ENCODE measurements at regions of chr2 and their contacts with region 1.

Region 1: GRCh38 chr2:55357927-55358326 is 61.7 kb downstream of the CCDC88A start:
- DNase-seq: no peak
- ATAC-seq: no peak
- H3K4me3 ChIP-seq: no peak overlapping the region
- H3K27ac ChIP-seq: no peak overlapping the region
- H3K4me1 ChIP-seq: peaks cover 6% of the 10 kb centered on the region; the same call in 1 of the 2 replicates
- H3K27me3 ChIP-seq: no peaks in the 10 kb centered on the region
- CTCF ChIP-seq: no peak

Region 2: DNA sequence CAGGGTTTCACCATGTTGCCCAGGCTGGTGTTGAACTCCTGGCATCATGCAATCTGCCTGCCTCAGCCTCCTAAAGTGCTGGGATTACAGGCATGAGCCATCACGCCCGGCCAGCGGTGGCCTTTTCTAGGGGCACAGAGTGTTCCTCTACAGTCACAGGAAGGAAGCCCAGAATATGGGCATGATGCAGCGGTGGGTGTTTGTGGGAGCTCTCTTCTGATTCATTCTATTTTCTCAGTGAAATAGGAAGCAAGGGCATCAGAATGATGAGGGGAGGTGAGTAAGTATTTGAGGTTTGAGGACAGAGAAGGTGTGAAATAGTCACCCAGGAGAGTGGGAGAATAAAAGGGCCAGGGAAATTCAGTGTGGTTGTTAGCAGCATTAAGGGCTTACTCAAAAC is 1316.8 kb before region 1 on chr2:
- CTCF ChIA-PET with region 1: no interaction called
- POLR2A ChIA-PET with region 1: no interaction called
- intact Hi-C with region 1: no loop called
- DNase-seq: peak; percentile 41
- ATAC-seq: peak; percentile 18; the same call in 1 of the 2 replicates
- H3K4me3 ChIP-seq: no peak overlapping the region
- H3K27ac ChIP-seq: peak overlapping the region; percentile 22; the same call in 1 of the 2 replicates
- H3K4me1 ChIP-seq: peaks cover 27% of the 10 kb centered on the region
- H3K27me3 ChIP-seq: no peaks in the 10 kb centered on the region
- CTCF ChIP-seq: no peak

Region 3: GRCh38 chr2:55338268-55338667 is 19.7 kb before region 1 on chr2:
- CTCF ChIA-PET with region 1: no interaction called
- POLR2A ChIA-PET with region 1: interaction called, 25 read pairs
- intact Hi-C with region 1: no loop called
- DNase-seq: no peak
- ATAC-seq: no peak
- H3K4me3 ChIP-seq: no peak overlapping the region
- H3K27ac ChIP-seq: no peak overlapping the region
- H3K4me1 ChIP-seq: no peaks in the 10 kb centered on the region
- H3K27me3 ChIP-seq: no peaks in the 10 kb centered on the region
- CTCF ChIP-seq: no peak

Measured in PC-3 (cell line).